ENCODE measurements at regions of chr5 and their contacts with region 1.

Region 1: GRCh38 chr5:64634997-64635686 is 55.2 kb upstream of the SHISAL2B start:
- DNase-seq: peak in 6 of 9 donors; percentile 2 to 41 (median 35)
- ATAC-seq: peak; percentile 60
- H3K4me3 ChIP-seq: no peak overlapping the region
- H3K4me3 Mint-ChIP-seq: no peak overlapping the region
- H3K27ac ChIP-seq: no peak overlapping the region
- H3K27ac Mint-ChIP-seq: no peak overlapping the region
- H3K4me1 ChIP-seq: no peaks in the 10 kb centered on the region
- H3K4me1 Mint-ChIP-seq: peaks cover 0 to 9% (median 0%) of the 10 kb centered on the region in 7 donors
- H3K27me3 ChIP-seq: peaks cover 0 to 3% of the 10 kb centered on the region in 2 donors
- H3K27me3 Mint-ChIP-seq: peaks cover 15 to 28% (median 21%) of the 10 kb centered on the region in 5 donors

Region 2: DNA sequence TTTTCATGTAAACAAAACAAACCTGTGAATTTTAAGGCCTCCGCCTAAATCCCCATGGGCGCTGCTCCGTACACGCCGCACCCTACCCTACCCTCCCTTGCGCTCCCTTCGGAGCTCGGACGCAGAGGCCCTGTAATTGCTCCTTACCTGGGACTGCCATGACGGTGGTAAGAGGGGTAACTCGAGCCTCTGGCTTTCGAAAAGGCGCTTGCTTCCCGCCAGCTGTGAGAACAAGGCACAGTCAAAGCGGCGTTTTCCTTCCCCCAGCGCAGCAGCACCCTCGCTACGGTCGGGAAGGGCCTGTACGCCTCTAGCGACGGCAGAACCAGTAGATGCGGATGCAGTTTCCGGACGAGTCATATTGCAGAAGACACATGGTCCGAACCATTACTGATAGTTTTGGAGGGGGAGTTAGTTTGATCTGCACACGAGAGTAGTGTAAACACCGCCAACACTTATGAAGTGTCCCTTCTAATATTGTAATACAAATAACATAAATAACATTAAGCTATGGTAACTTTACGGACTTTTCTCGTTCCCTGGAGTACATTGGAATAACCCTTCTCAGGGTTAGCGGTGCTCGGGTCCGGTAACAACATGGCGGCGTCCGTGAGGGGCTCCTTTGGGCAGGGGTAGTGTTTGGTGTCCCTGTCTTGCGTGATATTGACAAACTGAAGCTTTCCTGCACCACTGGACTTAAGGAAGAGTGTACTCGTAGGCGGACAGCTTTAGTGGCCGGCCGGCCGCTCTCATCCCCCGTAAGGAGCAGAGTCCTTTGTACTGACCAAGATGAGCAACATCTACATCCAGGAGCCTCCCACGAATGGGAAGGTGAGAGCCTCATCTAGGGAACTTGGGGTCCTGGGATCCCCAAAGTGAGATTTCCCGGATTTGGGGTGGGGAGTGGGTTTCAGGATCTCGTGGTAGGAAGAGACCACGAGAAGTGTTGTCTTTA is 133.5 kb after region 1 on chr5 and contains the starts of genes CWC27 and SREK1IP1:
- CTCF ChIA-PET with region 1: interaction called, 3 read pairs
- POLR2A ChIA-PET with region 1: no interaction called
- intact Hi-C with region 1: loop called in 1 of 2 experiments (anchors 5 kb)
- DNase-seq: peak; percentile 65 to 88 (median 83)
- ATAC-seq: peak; percentile 98
- H3K4me3 ChIP-seq: peak within 1 kb of the TSS; percentile 90
- H3K4me3 Mint-ChIP-seq: peak within 1 kb of the TSS; percentile 94 to 100 (median 99)
- H3K27ac ChIP-seq: peak within 1 kb of the TSS; percentile 88
- H3K27ac Mint-ChIP-seq: peak within 1 kb of the TSS; percentile 96 to 100 (median 98)
- H3K4me1 ChIP-seq: peaks cover 21 to 37% of the 10 kb centered on the region in 2 donors
- H3K4me1 Mint-ChIP-seq: peaks cover 34 to 80% (median 77%) of the 10 kb centered on the region in 7 donors
- H3K27me3 ChIP-seq: no peaks in the 10 kb centered on the region
- H3K27me3 Mint-ChIP-seq: no peaks in the 10 kb centered on the region
- total RNA-seq, gene CWC27: 17.8 to 27.4 (median 21.0) TPM
- total RNA-seq, gene SREK1IP1: 11.7 to 29.9 (median 21.7) TPM

Region 3: DNA sequence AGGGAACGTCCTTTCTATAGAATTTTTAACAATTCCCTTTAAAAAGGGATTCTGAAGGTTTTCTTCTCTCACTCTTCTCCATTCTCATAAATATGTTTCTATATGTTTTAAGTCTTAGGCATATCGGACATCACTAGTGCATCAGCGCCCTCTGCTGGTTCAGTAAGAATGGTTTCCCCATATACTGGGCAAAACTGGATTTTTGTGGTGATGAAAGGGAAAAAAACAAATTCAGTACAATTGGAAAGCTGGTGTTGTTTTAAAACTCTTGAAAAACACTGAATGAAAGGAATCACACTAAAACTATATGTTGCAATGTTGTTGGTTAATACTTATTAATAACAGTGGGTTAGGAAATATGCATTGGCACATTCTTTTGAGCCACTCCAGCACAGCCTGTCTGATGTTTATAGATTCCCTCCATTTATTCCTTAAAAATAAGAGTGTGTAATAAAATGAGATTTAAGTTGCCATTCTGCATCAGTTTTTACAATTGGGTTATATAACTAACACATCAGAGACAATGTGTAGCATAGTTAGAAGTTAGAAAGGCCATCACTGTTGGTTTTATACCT is 149.4 kb after region 1 on chr5:
- CTCF ChIA-PET with region 1: interaction called, 21 read pairs
- POLR2A ChIA-PET with region 1: no interaction called
- intact Hi-C with region 1: loop called (anchors 1 kb)
- DNase-seq: peak; percentile 36 to 74 (median 65)
- ATAC-seq: peak; percentile 90
- H3K4me3 ChIP-seq: no peak overlapping the region
- H3K4me3 Mint-ChIP-seq: no peak overlapping the region
- H3K27ac ChIP-seq: no peak overlapping the region
- H3K27ac Mint-ChIP-seq: peak overlapping the region in 1 of 9 donors; percentile 37
- H3K4me1 ChIP-seq: no peaks in the 10 kb centered on the region
- H3K4me1 Mint-ChIP-seq: peaks cover 0 to 16% (median 11%) of the 10 kb centered on the region in 7 donors
- H3K27me3 ChIP-seq: no peaks in the 10 kb centered on the region
- H3K27me3 Mint-ChIP-seq: no peaks in the 10 kb centered on the region

Region 4: GRCh38 chr5:64958757-64959391 is 323.7 kb after region 1 on chr5:
- CTCF ChIA-PET with region 1: no interaction called
- POLR2A ChIA-PET with region 1: no interaction called
- intact Hi-C with region 1: loop called in 1 of 2 experiments (anchors 10 kb)
- DNase-seq: peak in 5 of 9 donors; percentile 3 to 20 (median 9)
- ATAC-seq: no peak
- H3K4me3 ChIP-seq: no peak overlapping the region
- H3K4me3 Mint-ChIP-seq: no peak overlapping the region
- H3K27ac ChIP-seq: no peak overlapping the region
- H3K27ac Mint-ChIP-seq: no peak overlapping the region
- H3K4me1 ChIP-seq: no peaks in the 10 kb centered on the region
- H3K4me1 Mint-ChIP-seq: no peaks in the 10 kb centered on the region
- H3K27me3 ChIP-seq: no peaks in the 10 kb centered on the region
- H3K27me3 Mint-ChIP-seq: peaks cover 0 to 3% (median 0%) of the 10 kb centered on the region in 5 donors

Region 5: GRCh38 chr5:65013166-65013565 is 378.0 kb after region 1 on chr5:
- CTCF ChIA-PET with region 1: no interaction called
- POLR2A ChIA-PET with region 1: no interaction called
- intact Hi-C with region 1: no loop called
- DNase-seq: no peak
- ATAC-seq: no peak
- H3K4me3 ChIP-seq: no peak overlapping the region
- H3K4me3 Mint-ChIP-seq: no peak overlapping the region
- H3K27ac ChIP-seq: no peak overlapping the region
- H3K27ac Mint-ChIP-seq: peak overlapping the region in 1 of 9 donors; percentile 1
- H3K4me1 ChIP-seq: no peaks in the 10 kb centered on the region
- H3K4me1 Mint-ChIP-seq: peaks cover 0 to 7% (median 0%) of the 10 kb centered on the region in 7 donors
- H3K27me3 ChIP-seq: no peaks in the 10 kb centered on the region
- H3K27me3 Mint-ChIP-seq: no peaks in the 10 kb centered on the region